RWPE1 (cell line): ENCODE measurements at regions of chr1 and their contacts with region 1.

Region 1: GRCh38 chr1:16366722-16367257 is at the start of gene SZRD1:
- DNase-seq: peak; percentile 94
- H3K27ac ChIP-seq: peak within 1 kb of the TSS; percentile 94
- CTCF ChIP-seq: no peak

Region 2: GRCh38 chr1:16230744-16231143 is 136.0 kb before region 1 on chr1:
- CTCF ChIA-PET with region 1: no interaction called
- POLR2A ChIA-PET with region 1: no interaction called
- DNase-seq: no peak
- H3K27ac ChIP-seq: peak overlapping the region; percentile 17; the same call in 1 of the 2 replicates
- CTCF ChIP-seq: no peak

Region 3: DNA sequence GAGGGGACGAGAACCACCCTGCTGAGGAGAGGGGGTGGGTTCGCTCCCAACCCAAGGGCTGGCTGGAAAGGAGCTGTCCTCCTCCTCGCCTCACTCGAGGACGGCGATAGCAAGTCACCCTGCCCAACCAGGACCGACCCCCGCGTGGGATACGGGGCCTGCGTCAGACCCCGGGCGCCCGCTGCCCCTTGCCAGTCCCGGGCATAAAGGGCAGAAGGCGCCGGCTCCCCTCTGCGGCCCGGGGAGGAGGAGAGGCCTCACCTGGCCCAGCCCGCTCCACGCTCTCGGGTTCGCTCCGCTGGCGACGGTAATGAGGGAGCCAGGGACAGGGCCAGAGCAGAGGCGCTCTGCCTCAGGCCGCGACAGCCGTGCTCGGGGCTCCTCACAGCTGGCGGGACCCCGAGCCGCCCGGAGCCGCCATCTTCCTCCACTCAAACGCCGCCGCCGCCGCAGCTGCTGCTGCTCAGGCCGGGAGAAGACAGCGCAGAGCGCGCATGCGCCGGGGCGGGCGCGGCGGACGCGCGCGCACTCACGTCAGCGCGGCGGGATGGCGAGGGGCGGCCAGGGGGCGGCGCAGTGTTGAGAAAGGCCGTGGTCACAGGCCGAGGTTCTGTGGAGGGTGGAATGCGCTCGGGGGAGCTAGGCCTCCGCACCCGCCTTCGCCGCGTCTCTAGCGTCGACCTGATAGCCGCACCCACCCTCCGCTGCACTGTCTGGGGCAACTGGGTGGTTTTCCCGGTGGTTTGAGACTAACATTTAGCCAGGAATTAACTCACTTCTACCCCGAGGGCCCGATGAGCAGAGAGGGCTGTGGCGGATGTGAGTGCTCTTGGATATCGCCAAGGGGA is 14.6 kb before region 1 on chr1 and contains the start of gene FBXO42:
- CTCF ChIA-PET with region 1: interaction called, 11 read pairs
- POLR2A ChIA-PET with region 1: no interaction called
- DNase-seq: peak; percentile 87
- H3K27ac ChIP-seq: peak within 1 kb of the TSS; percentile 85
- CTCF ChIP-seq: peak; percentile 46